ENCODE measurements at regions of chr1 and their contacts with region 1.

Region 1: GRCh38 chr1:169711469-169712281 is at the start of gene SELL:
- DNase-seq: peak; percentile 71
- ATAC-seq: peak; percentile 94
- H3K4me3 Mint-ChIP-seq: peak within 1 kb of the TSS; percentile 66
- H3K27ac Mint-ChIP-seq: no peak within 1 kb of the TSS
- H3K4me1 Mint-ChIP-seq: peaks cover 8% of the 10 kb centered on the region
- H3K27me3 Mint-ChIP-seq: peaks cover 12% of the 10 kb centered on the region; the same call in 1 of the 2 replicates
- CTCF ChIP-seq: peak; percentile 44
- total RNA-seq, gene SELL: 0.26 to 0.85 TPM (median 0.41 TPM) in 3 replicates

Region 2: GRCh38 chr1:169514566-169515270 is 197.0 kb before region 1 on chr1:
- CTCF ChIA-PET with region 1: no interaction called
- POLR2A ChIA-PET with region 1: no interaction called
- DNase-seq: no peak
- ATAC-seq: no peak
- H3K4me3 Mint-ChIP-seq: no peak overlapping the region
- H3K27ac Mint-ChIP-seq: no peak overlapping the region
- H3K4me1 Mint-ChIP-seq: no peaks in the 10 kb centered on the region
- H3K27me3 Mint-ChIP-seq: no peaks in the 10 kb centered on the region
- CTCF ChIP-seq: no peak

Region 3: GRCh38 chr1:169595764-169596711 is 115.6 kb before region 1 on chr1:
- CTCF ChIA-PET with region 1: interaction called, 12 read pairs
- POLR2A ChIA-PET with region 1: no interaction called
- DNase-seq: peak; percentile 48
- ATAC-seq: peak; percentile 95
- H3K4me3 Mint-ChIP-seq: no peak overlapping the region
- H3K27ac Mint-ChIP-seq: no peak overlapping the region
- H3K4me1 Mint-ChIP-seq: no peaks in the 10 kb centered on the region
- H3K27me3 Mint-ChIP-seq: peaks cover 6% of the 10 kb centered on the region; the same call in 1 of the 2 replicates
- CTCF ChIP-seq: no peak

Region 4: GRCh38 chr1:169610858-169611257 is 100.8 kb before region 1 on chr1:
- CTCF ChIA-PET with region 1: interaction called, 10 read pairs
- POLR2A ChIA-PET with region 1: interaction called, 3 read pairs
- DNase-seq: no peak
- ATAC-seq: no peak
- H3K4me3 Mint-ChIP-seq: no peak overlapping the region
- H3K27ac Mint-ChIP-seq: no peak overlapping the region
- H3K4me1 Mint-ChIP-seq: no peaks in the 10 kb centered on the region
- H3K27me3 Mint-ChIP-seq: peaks cover 3% of the 10 kb centered on the region; the same call in 1 of the 2 replicates
- CTCF ChIP-seq: no peak

Region 5: DNA sequence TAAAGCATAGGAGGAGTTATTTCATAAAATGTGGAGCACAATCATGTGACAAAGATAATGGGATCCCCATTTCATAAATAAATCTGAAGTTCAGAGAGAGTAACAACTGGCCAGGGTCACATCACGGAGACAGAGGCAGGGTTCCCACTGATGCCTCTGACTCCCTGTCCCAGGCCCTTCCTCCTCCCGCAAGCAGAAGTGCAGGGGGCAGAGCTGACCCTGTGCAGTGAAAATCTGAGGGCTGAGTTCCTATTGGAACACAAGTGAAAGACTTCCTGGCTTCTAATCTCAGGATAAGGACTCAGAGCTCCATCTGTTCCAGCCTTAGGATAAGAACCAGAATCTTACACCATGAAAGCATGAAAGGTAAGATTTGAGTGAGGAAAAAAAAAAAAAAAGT is 22.3 kb before region 1 on chr1:
- CTCF ChIA-PET with region 1: interaction called, 12 read pairs
- POLR2A ChIA-PET with region 1: no interaction called
- DNase-seq: no peak
- ATAC-seq: peak; percentile 61; the same call in 1 of the 2 replicates
- H3K4me3 Mint-ChIP-seq: no peak overlapping the region
- H3K27ac Mint-ChIP-seq: no peak overlapping the region
- H3K4me1 Mint-ChIP-seq: peaks cover 26% of the 10 kb centered on the region
- H3K27me3 Mint-ChIP-seq: no peaks in the 10 kb centered on the region
- CTCF ChIP-seq: no peak

Region 6: DNA sequence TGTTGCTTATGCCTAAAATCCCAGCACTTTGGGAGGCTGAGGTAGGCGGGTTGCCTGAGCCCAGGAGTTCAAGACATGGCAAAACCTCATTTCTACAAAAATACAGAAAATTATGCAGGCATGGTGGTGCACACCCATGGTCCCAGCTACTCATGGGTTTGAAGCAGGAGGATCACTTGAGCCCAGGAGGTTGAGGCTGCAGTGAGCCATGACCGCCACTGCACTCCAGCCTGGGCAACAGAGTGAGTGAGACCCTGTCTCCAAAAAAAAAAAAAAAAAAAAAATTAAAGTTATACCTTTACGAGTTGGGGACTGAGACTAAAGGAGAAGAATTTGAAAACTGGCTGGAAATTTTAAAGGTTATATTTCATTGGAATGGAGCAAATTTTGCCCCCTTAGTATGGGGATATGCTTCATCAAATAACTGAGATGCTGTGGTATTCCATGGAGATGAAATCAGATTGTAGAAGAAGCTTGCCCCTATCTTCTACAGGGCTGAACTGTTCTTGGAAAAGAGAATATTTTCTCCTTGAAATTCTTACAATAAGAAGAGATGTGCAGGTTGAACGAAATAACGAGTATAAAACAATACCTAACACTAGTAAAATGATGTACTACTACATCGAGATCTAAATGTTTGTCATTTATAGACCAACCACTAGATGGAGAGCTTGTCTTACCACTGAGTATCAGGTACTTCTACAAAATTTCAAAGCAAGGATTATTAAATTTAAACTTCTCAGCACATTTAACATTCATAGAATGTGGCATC is 216.9 kb after region 1 on chr1:
- CTCF ChIA-PET with region 1: no interaction called
- POLR2A ChIA-PET with region 1: no interaction called
- DNase-seq: no peak
- ATAC-seq: peak; percentile 56
- H3K4me3 Mint-ChIP-seq: no peak overlapping the region
- H3K27ac Mint-ChIP-seq: no peak overlapping the region
- H3K4me1 Mint-ChIP-seq: no peaks in the 10 kb centered on the region
- H3K27me3 Mint-ChIP-seq: no peaks in the 10 kb centered on the region
- CTCF ChIP-seq: peak; percentile 50; the same call in 1 of the 2 replicates

Measured in WTC11 (cell line).